ENCODE measurements at regions of chr6 and their contacts with region 1.

Region 1: DNA sequence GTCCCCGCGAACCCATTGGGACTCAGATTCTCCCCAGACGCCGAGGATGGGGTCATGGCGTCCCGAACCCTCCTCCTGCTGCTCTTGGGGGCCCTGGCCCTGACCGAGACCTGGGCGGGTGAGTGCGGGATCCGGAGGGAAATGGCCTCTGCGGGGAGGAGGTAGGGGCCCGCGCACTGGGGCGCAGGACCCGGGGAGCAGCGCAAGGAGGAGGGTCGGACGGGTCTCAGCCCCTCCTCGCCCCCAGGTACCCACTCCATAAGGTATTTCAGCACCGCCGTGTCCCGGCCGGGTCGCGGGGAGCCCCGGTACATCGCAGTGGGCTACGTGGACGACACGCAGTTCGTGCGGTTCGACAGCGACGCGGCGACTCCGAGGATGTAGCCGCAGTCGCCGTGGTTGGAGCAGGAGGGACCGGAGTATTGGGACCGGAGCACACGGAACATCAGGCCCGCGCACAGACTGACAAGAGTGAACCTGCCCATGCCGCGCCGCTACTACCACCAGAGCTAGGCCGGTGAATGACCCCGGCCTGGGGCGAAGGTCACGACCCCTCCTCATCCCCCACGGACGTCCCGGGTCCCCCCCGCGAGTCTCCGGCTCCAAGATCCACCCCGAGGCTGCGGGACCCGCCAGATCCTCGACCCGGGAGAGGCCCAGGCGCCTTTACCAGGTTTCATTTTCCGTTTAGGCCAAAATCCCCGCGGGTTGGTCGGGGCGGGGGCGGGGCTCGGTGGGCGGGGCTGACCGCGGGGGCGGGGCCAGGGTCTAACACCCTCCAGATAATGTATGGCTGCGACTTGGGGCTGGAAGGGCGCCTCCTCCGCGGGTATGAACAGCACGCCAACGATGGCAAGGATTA is 15.7 kb upstream of the HLA-A start:
- DNase-seq: peak; percentile 77 to 81
- ATAC-seq: peak; percentile 80 to 92 (median 83)
- H3K4me3 ChIP-seq: peak overlapping the region; percentile 77
- H3K27ac ChIP-seq: peak overlapping the region; percentile 89
- H3K4me1 ChIP-seq: no peaks in the 10 kb centered on the region
- H3K27me3 ChIP-seq: no peaks in the 10 kb centered on the region
- CTCF ChIP-seq: no peak

Region 2: DNA sequence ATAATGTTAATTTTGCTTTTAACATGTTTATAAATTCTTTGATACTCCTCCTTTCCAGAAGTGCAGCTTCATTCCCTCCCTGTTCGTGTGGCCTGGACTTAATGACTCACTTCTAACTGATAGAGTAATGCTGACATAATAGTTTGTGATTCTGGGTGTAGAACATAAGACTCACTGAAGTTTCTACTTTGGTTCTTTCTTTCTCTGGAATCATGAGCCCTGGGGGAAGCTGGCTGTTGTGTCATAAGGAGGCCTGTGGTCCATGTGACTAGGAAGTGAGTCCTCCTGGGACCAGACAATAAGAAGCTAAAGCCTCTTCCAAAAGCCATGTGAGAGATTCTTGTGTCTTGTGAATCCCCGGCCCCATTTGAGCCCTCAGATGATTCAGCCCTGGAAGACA is 129.5 kb before region 1 on chr6:
- intact Hi-C with region 1: no loop called
- DNase-seq: no peak
- ATAC-seq: no peak
- H3K4me3 ChIP-seq: no peak overlapping the region
- H3K27ac ChIP-seq: no peak overlapping the region
- H3K4me1 ChIP-seq: peaks cover 2% of the 10 kb centered on the region
- H3K27me3 ChIP-seq: peaks cover 0 to 44% (median 4%) of the 10 kb centered on the region in 3 donors
- CTCF ChIP-seq: no peak

Region 3: GRCh38 chr6:29864037-29864795 is 62.4 kb before region 1 on chr6:
- intact Hi-C with region 1: no loop called
- DNase-seq: no peak
- ATAC-seq: no peak
- H3K4me3 ChIP-seq: no peak overlapping the region
- H3K27ac ChIP-seq: no peak overlapping the region
- H3K4me1 ChIP-seq: no peaks in the 10 kb centered on the region
- H3K27me3 ChIP-seq: peaks cover 0 to 10% (median 4%) of the 10 kb centered on the region in 3 donors
- CTCF ChIP-seq: no peak

Region 4: GRCh38 chr6:29974901-29975560 is 48.4 kb after region 1 on chr6:
- intact Hi-C with region 1: loop called in 1 of 2 experiments (anchors 5 kb)
- DNase-seq: no peak
- ATAC-seq: no peak
- H3K4me3 ChIP-seq: peak overlapping the region; percentile 75
- H3K27ac ChIP-seq: no peak overlapping the region
- H3K4me1 ChIP-seq: peaks cover 14% of the 10 kb centered on the region
- H3K27me3 ChIP-seq: no peaks in the 10 kb centered on the region
- CTCF ChIP-seq: no peak